Adrenal gland (tissue), 19 donors: ENCODE measurements at regions of chr16 and their contacts with region 1.

Region 1: GRCh38 chr16:89167425-89167941 is 4.1 kb upstream of the CDH15 start:
- DNase-seq: peak; percentile 87 to 94 (median 92)
- H3K4me3 ChIP-seq: no peak overlapping the region
- H3K27ac ChIP-seq: no peak overlapping the region
- H3K4me1 ChIP-seq: peaks cover 6 to 14% of the 10 kb centered on the region in 2 donors
- H3K27me3 ChIP-seq: peaks cover 9% of the 10 kb centered on the region
- CTCF ChIP-seq: peak; percentile 79 to 98 (median 95)
- POLR2A ChIP-seq: no peak

Region 2: GRCh38 chr16:88737298-88738150 is 430.0 kb before region 1 on chr16:
- intact Hi-C with region 1: loop called (anchors 5 kb)
- DNase-seq: peak; percentile 67 to 90 (median 80)
- H3K4me3 ChIP-seq: no peak overlapping the region
- H3K27ac ChIP-seq: no peak overlapping the region
- H3K4me1 ChIP-seq: peaks cover 0 to 4% of the 10 kb centered on the region in 2 donors
- H3K27me3 ChIP-seq: no peaks in the 10 kb centered on the region
- CTCF ChIP-seq: peak; percentile 91 to 99 (median 97)
- POLR2A ChIP-seq: no peak

Region 3: DNA sequence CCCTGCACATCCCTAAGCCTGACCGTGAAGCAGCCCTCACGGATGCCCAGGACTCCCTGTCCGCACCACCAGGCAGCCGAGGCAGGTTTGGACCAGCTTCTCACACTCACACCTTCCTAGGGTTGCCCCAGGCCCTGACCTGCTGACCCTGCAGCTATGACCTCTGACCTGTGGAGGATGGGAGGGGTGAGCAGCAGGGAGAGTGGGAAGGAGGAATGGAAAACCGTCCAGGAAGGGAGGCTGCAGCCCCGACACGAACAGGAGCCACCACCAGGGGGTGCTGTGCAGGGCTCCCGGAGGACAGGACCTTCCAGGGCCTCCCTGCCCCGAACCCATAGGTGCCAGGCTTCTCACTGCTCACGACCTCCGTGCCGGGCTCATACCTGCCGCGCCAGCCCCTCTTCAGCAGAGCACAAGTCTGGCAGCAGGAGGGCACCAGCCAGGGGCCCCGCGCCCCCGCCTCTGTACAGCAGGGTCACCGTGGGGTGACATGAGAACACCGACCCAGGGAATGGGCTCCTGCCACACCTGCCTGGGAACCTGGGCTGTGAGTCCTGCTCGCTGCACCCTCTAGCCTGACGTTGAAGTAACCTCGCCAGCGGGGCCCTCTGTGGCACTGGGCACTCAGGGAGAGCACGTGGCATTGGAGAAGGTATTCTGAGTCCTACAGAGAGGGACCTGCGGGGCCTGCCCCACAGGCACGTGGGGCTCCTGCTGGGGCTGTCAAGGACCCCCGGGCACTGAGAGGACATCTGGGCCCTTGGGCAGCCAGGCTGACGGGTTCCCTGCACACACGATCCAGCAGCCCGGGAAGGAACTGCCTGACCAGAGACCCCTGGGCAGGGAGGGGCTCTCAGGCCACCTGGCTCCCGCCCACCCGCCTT is 423.5 kb before region 1 on chr16:
- intact Hi-C with region 1: loop called (anchors 5 kb)
- DNase-seq: peak; percentile 71 to 88 (median 83)
- H3K4me3 ChIP-seq: no peak overlapping the region
- H3K27ac ChIP-seq: peak overlapping the region in 1 of 5 donors; percentile 43
- H3K4me1 ChIP-seq: peaks cover 0 to 12% of the 10 kb centered on the region in 2 donors
- H3K27me3 ChIP-seq: no peaks in the 10 kb centered on the region
- CTCF ChIP-seq: peak; percentile 79 to 92 (median 87)
- POLR2A ChIP-seq: no peak

Region 4: GRCh38 chr16:88815901-88816589 is 351.4 kb before region 1 on chr16:
- intact Hi-C with region 1: loop called (anchors 5 kb)
- DNase-seq: peak in 3 of 7 donors; percentile 55 to 63 (median 61)
- H3K4me3 ChIP-seq: no peak overlapping the region
- H3K27ac ChIP-seq: no peak overlapping the region
- H3K4me1 ChIP-seq: peaks cover 15 to 23% of the 10 kb centered on the region in 2 donors
- H3K27me3 ChIP-seq: no peaks in the 10 kb centered on the region
- CTCF ChIP-seq: peak; percentile 44 to 83 (median 71)
- POLR2A ChIP-seq: no peak

Region 5: GRCh38 chr16:88941913-88942909 is 225.3 kb before region 1 on chr16:
- intact Hi-C with region 1: loop called (anchors 2 kb)
- DNase-seq: peak in 1 of 7 donors; percentile 68
- H3K4me3 ChIP-seq: peak overlapping the region in 1 of 4 donors; percentile 66
- H3K27ac ChIP-seq: no peak overlapping the region
- H3K4me1 ChIP-seq: peaks cover 4 to 19% of the 10 kb centered on the region in 2 donors
- H3K27me3 ChIP-seq: peaks cover 17% of the 10 kb centered on the region
- CTCF ChIP-seq: peak in 5 of 6 experiments; percentile 9 to 78 (median 59)
- POLR2A ChIP-seq: no peak

Region 6: DNA sequence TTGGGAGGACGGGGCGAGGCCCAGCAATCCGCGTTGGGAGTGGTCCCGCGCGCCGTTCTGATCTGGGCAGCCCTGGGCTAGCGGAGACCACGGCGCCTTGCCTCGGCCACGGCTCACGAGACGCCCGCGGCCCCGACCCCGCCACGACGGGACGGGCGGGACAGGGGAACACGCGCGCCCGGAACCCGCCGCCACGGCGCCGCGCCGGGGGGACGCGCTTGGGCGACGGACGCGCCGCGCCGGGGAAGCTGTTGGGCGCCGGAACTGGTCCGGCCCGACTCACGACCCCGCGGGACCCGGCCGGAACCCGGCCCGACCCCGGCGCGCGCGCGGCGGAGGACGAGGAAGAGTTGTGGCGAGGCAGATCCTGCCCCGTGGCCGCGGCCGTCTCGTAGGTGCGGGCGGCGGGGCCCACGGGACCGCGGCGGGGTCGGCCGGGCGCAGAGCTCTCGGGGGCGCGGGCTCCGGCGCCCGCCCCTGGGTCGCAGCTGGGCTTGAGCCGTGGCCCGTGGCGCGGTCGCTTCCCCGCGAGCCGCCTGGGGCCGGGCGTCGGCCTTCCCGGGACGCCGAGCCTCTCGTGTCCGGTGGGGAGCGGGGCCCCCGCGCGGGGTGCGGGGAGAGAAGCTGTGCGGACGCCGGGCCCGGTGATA is 73.8 kb before region 1 on chr16 and contains the start of gene ACSF3:
- intact Hi-C with region 1: loop called in 1 of 2 experiments (anchors 10 kb)
- DNase-seq: peak; percentile 40 to 75 (median 63)
- H3K4me3 ChIP-seq: peak within 1 kb of the TSS; percentile 5 to 91 (median 56)
- H3K27ac ChIP-seq: peak within 1 kb of the TSS in 3 of 5 donors; percentile 57 to 89 (median 66)
- H3K4me1 ChIP-seq: peaks cover 17 to 36% of the 10 kb centered on the region in 2 donors
- H3K27me3 ChIP-seq: peaks cover 13% of the 10 kb centered on the region
- CTCF ChIP-seq: no peak
- POLR2A ChIP-seq: peak in 1 of 2 donors; percentile 36
- total RNA-seq, gene ACSF3: 35.7 to 88.3 (median 55.8) TPM